HEK293 (cell line): ENCODE measurements at regions of chr5 and their contacts with region 1.

Region 1: GRCh38 chr5:135426102-135427082 is 20.8 kb downstream of the DCANP1 start:
- H3K4me3 ChIP-seq: no peak overlapping the region
- H3K27ac ChIP-seq: no peak overlapping the region
- H3K4me1 ChIP-seq: no peaks in the 10 kb centered on the region
- CTCF ChIP-seq: no peak

Region 2: GRCh38 chr5:135106610-135107471 is 319.6 kb before region 1 on chr5:
- CTCF ChIA-PET with region 1: no interaction called
- POLR2A ChIA-PET with region 1: no interaction called
- H3K4me3 ChIP-seq: no peak overlapping the region
- H3K27ac ChIP-seq: no peak overlapping the region
- H3K4me1 ChIP-seq: no peaks in the 10 kb centered on the region
- CTCF ChIP-seq: no peak

Region 3: DNA sequence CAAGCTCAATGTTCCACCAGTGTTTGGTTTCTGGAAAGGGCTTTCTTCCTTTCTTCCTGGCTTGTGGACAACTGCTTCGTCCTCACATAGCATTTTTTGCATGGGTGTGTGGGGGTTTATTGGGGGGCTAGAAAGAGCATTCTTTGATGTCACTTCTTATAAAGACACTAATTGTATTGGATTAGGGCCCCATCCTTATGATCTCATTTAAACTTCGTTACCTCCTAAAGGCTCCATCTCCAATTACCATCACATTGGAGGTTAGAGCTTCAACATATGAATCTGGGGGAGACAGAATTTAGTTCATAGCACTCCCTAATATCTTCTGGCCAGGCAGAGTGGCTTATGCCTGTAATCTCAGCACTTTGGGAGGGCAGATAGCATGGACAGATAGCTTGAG is 21.3 kb before region 1 on chr5:
- CTCF ChIA-PET with region 1: interaction called, 19 read pairs
- POLR2A ChIA-PET with region 1: no interaction called
- H3K4me3 ChIP-seq: no peak overlapping the region
- H3K27ac ChIP-seq: no peak overlapping the region
- H3K4me1 ChIP-seq: peaks cover 5% of the 10 kb centered on the region; the same call in 1 of the 2 replicates
- CTCF ChIP-seq: no peak

Region 4: DNA sequence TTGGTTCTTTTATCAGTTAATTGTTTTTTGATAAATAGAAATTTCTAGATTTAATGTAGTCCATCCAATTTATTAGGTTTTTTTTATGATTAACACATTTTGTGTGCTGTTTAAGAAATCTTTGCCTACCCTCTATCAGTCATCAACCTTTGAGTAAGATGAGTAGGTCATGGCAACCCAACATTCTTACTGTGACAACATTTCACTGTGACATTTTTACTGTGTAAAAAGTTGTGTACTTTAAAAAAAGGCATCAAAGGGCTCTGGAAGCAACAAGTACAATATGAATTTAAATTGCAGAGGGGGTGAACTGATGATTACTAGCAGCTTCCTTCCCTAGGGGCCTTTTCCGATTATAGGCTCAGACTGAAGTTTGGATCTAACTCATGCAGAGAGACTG is 16.0 kb before region 1 on chr5:
- CTCF ChIA-PET with region 1: interaction called, 19 read pairs
- POLR2A ChIA-PET with region 1: no interaction called
- H3K4me3 ChIP-seq: no peak overlapping the region
- H3K27ac ChIP-seq: no peak overlapping the region
- H3K4me1 ChIP-seq: no peaks in the 10 kb centered on the region
- CTCF ChIP-seq: no peak

Region 5: GRCh38 chr5:135437796-135438560 is 11.6 kb after region 1 on chr5:
- CTCF ChIA-PET with region 1: interaction called, 21 read pairs
- POLR2A ChIA-PET with region 1: no interaction called
- H3K4me3 ChIP-seq: no peak overlapping the region
- H3K27ac ChIP-seq: no peak overlapping the region
- H3K4me1 ChIP-seq: no peaks in the 10 kb centered on the region
- CTCF ChIP-seq: no peak

Region 6: DNA sequence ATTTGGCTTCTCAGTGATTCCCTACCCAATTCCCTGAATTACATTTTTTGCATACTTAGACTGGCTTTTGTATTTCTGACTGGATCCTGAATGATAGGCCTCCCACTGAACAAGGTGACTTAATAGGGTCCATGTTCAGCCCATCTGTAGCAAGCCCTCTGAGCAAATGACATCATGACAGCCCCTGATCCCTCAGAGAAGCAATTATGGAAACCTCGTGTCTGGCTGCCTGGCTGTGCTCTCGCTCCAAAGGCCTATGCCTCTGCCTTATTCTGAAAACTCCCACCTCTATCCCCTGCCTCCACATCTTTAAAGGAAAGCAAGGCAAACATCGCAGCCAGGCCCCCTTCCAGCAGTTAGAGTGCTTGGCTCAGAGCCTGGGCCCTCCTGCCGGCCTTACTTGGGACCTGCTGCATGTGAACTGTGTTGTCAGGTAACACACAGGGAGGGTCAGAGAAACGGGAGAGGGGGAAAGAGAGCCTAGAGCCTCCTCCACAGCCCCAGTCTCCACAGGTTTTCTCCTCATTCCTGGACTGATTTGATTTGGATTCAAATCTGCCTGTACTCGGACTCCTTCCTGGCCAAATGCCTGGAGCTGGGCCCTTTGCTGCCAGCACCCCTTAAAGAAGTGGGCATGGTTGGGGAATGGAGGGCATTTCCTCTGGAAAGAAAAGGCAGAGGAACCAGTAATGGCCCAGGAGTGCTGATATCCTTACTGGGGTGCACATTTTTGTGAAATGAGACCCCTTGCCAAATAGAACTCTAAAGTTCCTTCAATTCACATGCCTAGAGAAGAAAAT is 17.0 kb after region 1 on chr5:
- CTCF ChIA-PET with region 1: interaction called, 21 read pairs
- POLR2A ChIA-PET with region 1: no interaction called
- H3K4me3 ChIP-seq: no peak overlapping the region
- H3K27ac ChIP-seq: no peak overlapping the region
- H3K4me1 ChIP-seq: no peaks in the 10 kb centered on the region
- CTCF ChIP-seq: no peak